Ascending aorta (tissue), 2 donors: ENCODE measurements at regions of chr7 and their contacts with region 1.

Region 1: DNA sequence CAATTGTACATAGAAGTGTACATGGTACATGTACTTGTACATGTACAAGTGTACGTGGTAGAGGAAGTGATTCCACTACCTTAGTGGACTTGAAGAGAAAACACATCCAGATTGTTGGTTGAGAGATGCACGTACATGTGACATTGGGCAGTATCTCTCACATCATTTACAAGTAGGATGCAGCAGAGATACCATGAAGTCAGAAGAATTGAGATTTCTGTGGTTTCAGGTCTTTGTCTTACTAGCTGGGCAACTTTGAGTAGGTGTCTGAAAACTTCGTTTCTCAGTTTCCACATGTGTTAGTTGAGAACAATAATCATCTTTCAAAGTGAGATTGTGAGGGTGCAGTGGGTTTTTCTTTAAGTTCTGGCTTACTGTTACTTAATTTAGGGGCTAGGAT is 21.5 kb downstream of the CLDN12 start:
- DNase-seq: no peak
- H3K4me3 ChIP-seq: no peak overlapping the region
- H3K27ac ChIP-seq: no peak overlapping the region
- H3K4me1 ChIP-seq: no peaks in the 10 kb centered on the region
- H3K27me3 ChIP-seq: no peaks in the 10 kb centered on the region
- CTCF ChIP-seq: no peak

Region 2: GRCh38 chr7:90312745-90313144 is 112.0 kb before region 1 on chr7:
- intact Hi-C with region 1: loop called (anchors 5 kb)
- DNase-seq: no peak
- H3K4me3 ChIP-seq: no peak overlapping the region
- H3K27ac ChIP-seq: no peak overlapping the region
- H3K4me1 ChIP-seq: no peaks in the 10 kb centered on the region
- H3K27me3 ChIP-seq: no peaks in the 10 kb centered on the region
- CTCF ChIP-seq: peak in 1 of 3 experiments; percentile 5